CD8-positive, alpha-beta T cell (primary cell): ENCODE measurements at regions of chr22 and their contacts with region 1.

Region 1: GRCh38 chr22:45742866-45743450 is 71.3 kb downstream of the ATXN10 start:
- DNase-seq: no peak
- ATAC-seq: no peak
- H3K4me3 ChIP-seq: no peak overlapping the region
- H3K4me3 Mint-ChIP-seq: no peak overlapping the region
- H3K27ac ChIP-seq: no peak overlapping the region
- H3K27ac Mint-ChIP-seq: no peak overlapping the region
- H3K4me1 ChIP-seq: no peaks in the 10 kb centered on the region
- H3K4me1 Mint-ChIP-seq: peaks cover 2% of the 10 kb centered on the region
- H3K27me3 ChIP-seq: no peaks in the 10 kb centered on the region
- H3K27me3 Mint-ChIP-seq: no peaks in the 10 kb centered on the region
- CTCF ChIP-seq: no peak

Region 2: GRCh38 chr22:45709060-45709739 is 33.8 kb before region 1 on chr22:
- CTCF ChIA-PET with region 1: interaction called, 3 read pairs
- POLR2A ChIA-PET with region 1: no interaction called
- intact Hi-C with region 1: loop called in 1 of 2 experiments (anchors 1 kb)
- DNase-seq: no peak
- ATAC-seq: no peak
- H3K4me3 ChIP-seq: no peak overlapping the region
- H3K4me3 Mint-ChIP-seq: no peak overlapping the region
- H3K27ac ChIP-seq: no peak overlapping the region
- H3K27ac Mint-ChIP-seq: no peak overlapping the region
- H3K4me1 ChIP-seq: no peaks in the 10 kb centered on the region
- H3K4me1 Mint-ChIP-seq: peaks cover 15% of the 10 kb centered on the region
- H3K27me3 ChIP-seq: no peaks in the 10 kb centered on the region
- H3K27me3 Mint-ChIP-seq: no peaks in the 10 kb centered on the region
- CTCF ChIP-seq: no peak

Region 3: DNA sequence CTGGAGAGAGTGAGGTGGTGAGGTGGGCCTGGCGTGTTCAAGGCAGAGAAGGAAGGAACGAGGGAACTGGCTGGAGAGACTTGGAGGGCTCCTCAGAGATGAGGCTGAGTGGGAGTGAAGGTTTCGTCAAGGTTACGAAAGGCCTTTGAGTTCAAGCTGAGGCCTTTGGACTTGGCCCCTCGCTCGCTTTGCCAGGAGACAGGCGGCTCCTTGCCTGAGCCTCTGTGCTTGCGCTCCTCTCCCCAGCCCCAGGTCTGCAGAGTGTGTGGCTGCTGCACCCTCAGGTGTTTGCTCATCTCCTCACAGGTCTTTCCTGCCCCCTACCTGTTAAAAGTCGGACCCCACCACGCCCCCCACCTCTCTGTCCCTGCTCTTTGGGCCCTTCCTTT is 20.3 kb after region 1 on chr22:
- CTCF ChIA-PET with region 1: no interaction called
- POLR2A ChIA-PET with region 1: no interaction called
- intact Hi-C with region 1: no loop called
- DNase-seq: no peak
- ATAC-seq: no peak
- H3K4me3 ChIP-seq: no peak overlapping the region
- H3K4me3 Mint-ChIP-seq: no peak overlapping the region
- H3K27ac ChIP-seq: no peak overlapping the region
- H3K27ac Mint-ChIP-seq: no peak overlapping the region
- H3K4me1 ChIP-seq: no peaks in the 10 kb centered on the region
- H3K4me1 Mint-ChIP-seq: peaks cover 2% of the 10 kb centered on the region
- H3K27me3 ChIP-seq: no peaks in the 10 kb centered on the region
- H3K27me3 Mint-ChIP-seq: no peaks in the 10 kb centered on the region
- CTCF ChIP-seq: no peak